B cell (primary cell): ENCODE measurements at regions of chr5 and their contacts with region 1.

Region 1: GRCh38 chr5:53095931-53096525 is 13.5 kb downstream of the MOCS2 start:
- DNase-seq: peak; percentile 67
- ATAC-seq: peak; percentile 80
- H3K4me3 ChIP-seq: no peak overlapping the region
- H3K4me3 Mint-ChIP-seq: no peak overlapping the region
- H3K27ac ChIP-seq: no peak overlapping the region
- H3K27ac Mint-ChIP-seq: no peak overlapping the region
- H3K4me1 ChIP-seq: no peaks in the 10 kb centered on the region
- H3K4me1 Mint-ChIP-seq: no peaks in the 10 kb centered on the region
- H3K27me3 ChIP-seq: no peaks in the 10 kb centered on the region
- H3K27me3 Mint-ChIP-seq: no peaks in the 10 kb centered on the region
- CTCF ChIP-seq: peak; percentile 96

Region 2: DNA sequence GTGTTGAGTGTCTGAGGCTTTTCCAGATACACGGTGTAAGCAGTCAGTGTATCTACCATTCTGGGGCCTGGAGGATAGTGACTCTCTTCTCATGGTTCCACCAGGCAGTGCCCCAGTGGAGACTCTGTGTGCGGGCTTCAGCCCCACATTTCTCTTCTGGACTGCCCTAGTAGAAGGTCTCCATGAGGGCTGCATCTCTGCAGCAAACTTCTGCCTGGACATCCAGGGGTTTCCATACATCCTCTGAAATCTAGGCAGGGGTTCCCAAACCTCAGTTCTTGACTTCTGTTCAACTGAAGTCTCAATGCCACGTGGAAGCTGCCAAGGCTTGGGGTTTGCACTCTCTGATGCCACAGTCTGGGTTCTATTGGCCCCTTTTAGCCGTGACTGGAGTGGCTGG is 564.9 kb before region 1 on chr5:
- CTCF ChIA-PET with region 1: no interaction called
- POLR2A ChIA-PET with region 1: no interaction called
- intact Hi-C with region 1: no loop called
- DNase-seq: peak; percentile 3
- ATAC-seq: no peak
- H3K4me3 ChIP-seq: no peak overlapping the region
- H3K4me3 Mint-ChIP-seq: no peak overlapping the region
- H3K27ac ChIP-seq: no peak overlapping the region
- H3K27ac Mint-ChIP-seq: no peak overlapping the region
- H3K4me1 ChIP-seq: no peaks in the 10 kb centered on the region
- H3K4me1 Mint-ChIP-seq: no peaks in the 10 kb centered on the region
- H3K27me3 ChIP-seq: no peaks in the 10 kb centered on the region
- H3K27me3 Mint-ChIP-seq: no peaks in the 10 kb centered on the region
- CTCF ChIP-seq: no peak

Region 3: DNA sequence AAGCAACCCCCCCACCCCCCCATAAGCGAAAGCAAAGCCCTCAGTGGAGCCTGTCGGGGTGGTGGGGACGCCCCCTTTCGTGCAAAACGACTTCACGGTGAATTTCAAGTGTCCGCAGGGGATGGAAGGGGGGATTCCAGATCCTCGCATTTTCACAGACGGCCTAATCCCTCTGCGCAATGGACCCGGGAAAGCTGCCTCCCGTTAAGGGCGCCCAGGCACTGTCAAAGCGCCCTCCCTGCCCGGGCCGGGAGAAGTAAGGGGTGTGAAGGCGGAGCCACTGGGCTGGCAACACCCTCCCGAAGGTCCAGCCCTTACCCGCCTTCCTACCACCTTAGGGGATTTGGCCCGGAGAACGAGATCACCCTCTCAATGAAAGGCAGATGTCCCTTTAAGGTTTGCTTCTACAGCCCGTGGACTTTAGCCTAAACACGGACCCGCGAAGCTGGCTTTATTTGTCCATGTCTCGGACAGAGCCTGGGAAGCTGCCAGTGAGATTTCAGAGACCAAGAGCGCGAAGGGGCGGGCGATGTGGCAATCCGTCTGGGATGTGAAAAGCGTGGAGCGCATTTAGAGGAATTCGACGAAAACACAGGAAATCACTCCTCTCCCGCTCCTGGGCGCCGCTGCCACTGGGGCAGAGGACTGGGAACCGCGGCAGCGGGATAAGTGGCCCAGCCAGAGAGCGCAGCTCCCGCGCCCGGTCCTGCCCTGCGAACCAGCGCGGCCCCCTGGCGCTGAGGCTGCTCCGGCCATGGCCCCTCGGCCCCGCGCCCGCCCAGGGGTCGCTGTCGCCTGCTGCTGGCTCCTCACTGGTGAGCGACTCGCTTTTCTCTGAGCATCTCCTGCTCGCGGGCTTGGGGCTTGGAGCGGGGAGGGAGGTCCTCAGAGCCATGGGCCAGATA is 308.2 kb before region 1 on chr5 and contains the starts of genes ITGA1 and PELO:
- CTCF ChIA-PET with region 1: interaction called, 3 read pairs
- POLR2A ChIA-PET with region 1: no interaction called
- intact Hi-C with region 1: loop called (anchors 1 kb)
- DNase-seq: peak; percentile 54
- ATAC-seq: peak; percentile 76
- H3K4me3 ChIP-seq: peak within 1 kb of the TSS; percentile 41 to 79 (median 64)
- H3K4me3 Mint-ChIP-seq: peak within 1 kb of the TSS; percentile 87
- H3K27ac ChIP-seq: no peak within 1 kb of the TSS
- H3K27ac Mint-ChIP-seq: no peak within 1 kb of the TSS
- H3K4me1 ChIP-seq: peaks cover 13 to 17% of the 10 kb centered on the region in 2 donors
- H3K4me1 Mint-ChIP-seq: peaks cover 19% of the 10 kb centered on the region
- H3K27me3 ChIP-seq: peaks cover 0 to 45% (median 32%) of the 10 kb centered on the region in 4 experiments
- H3K27me3 Mint-ChIP-seq: peaks cover 46% of the 10 kb centered on the region
- CTCF ChIP-seq: peak; percentile 7
- total RNA-seq, gene ITGA1: 0.05 and 0.74 TPM in 2 replicates
- total RNA-seq, gene PELO: 5.8 and 6.4 TPM in 2 replicates

Region 4: GRCh38 chr5:52948418-52949076 is 147.5 kb before region 1 on chr5:
- CTCF ChIA-PET with region 1: interaction called, 16 read pairs
- POLR2A ChIA-PET with region 1: no interaction called
- intact Hi-C with region 1: loop called (anchors 2 kb)
- DNase-seq: peak; percentile 53
- ATAC-seq: peak; percentile 78
- H3K4me3 ChIP-seq: no peak overlapping the region
- H3K4me3 Mint-ChIP-seq: no peak overlapping the region
- H3K27ac ChIP-seq: no peak overlapping the region
- H3K27ac Mint-ChIP-seq: no peak overlapping the region
- H3K4me1 ChIP-seq: no peaks in the 10 kb centered on the region
- H3K4me1 Mint-ChIP-seq: peaks cover 10% of the 10 kb centered on the region
- H3K27me3 ChIP-seq: no peaks in the 10 kb centered on the region
- H3K27me3 Mint-ChIP-seq: peaks cover 6% of the 10 kb centered on the region
- CTCF ChIP-seq: peak; percentile 62

Region 5: GRCh38 chr5:53109443-53110127 is 13.6 kb after region 1 on chr5 and contains the start of gene MOCS2:
- CTCF ChIA-PET with region 1: interaction called, 37 read pairs
- POLR2A ChIA-PET with region 1: no interaction called
- intact Hi-C with region 1: loop called (anchors 1 kb)
- DNase-seq: peak; percentile 93
- ATAC-seq: peak; percentile 96
- H3K4me3 ChIP-seq: peak within 1 kb of the TSS; percentile 65 to 84 (median 79)
- H3K4me3 Mint-ChIP-seq: peak within 1 kb of the TSS; percentile 98
- H3K27ac ChIP-seq: peak within 1 kb of the TSS; percentile 71 to 78
- H3K27ac Mint-ChIP-seq: peak within 1 kb of the TSS; percentile 92
- H3K4me1 ChIP-seq: peaks cover 9 to 11% of the 10 kb centered on the region in 2 donors
- H3K4me1 Mint-ChIP-seq: peaks cover 44% of the 10 kb centered on the region
- H3K27me3 ChIP-seq: no peaks in the 10 kb centered on the region
- H3K27me3 Mint-ChIP-seq: no peaks in the 10 kb centered on the region
- CTCF ChIP-seq: no peak
- total RNA-seq, gene MOCS2: 14.9 and 15.3 TPM in 2 replicates

Region 6: DNA sequence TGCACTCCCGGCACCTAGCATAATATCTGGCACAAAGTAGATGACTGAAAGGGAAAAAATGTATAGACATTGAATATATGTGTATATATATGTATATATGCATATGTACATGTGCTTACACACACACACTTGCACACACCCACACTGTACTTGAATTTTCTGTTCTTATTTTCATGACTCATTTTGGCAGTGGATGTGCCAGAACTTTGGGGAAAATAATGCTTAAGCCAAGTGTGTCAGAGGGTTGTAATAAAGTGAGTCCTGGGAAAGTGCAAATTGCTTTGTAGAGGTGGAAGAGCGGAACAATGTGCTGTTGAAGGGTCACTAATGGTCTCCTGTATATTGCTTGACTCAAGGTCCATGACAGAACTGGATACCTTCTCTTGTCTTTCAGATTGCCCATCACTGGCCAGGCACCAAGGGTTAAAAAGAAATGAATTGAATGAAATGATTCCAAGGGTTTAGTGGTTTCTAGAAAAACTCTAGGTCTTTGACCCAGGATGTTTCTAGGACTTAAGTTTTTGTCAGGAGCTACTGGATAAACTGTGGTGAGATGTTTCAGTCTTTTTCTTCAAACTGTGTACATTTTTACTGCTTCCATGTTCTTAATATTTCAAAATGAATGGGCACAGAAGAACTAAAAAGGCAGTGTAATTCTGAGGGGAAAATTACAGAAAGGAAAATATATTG is 143.4 kb after region 1 on chr5:
- CTCF ChIA-PET with region 1: no interaction called
- POLR2A ChIA-PET with region 1: no interaction called
- intact Hi-C with region 1: no loop called
- DNase-seq: no peak
- ATAC-seq: no peak
- H3K4me3 ChIP-seq: no peak overlapping the region
- H3K4me3 Mint-ChIP-seq: no peak overlapping the region
- H3K27ac ChIP-seq: no peak overlapping the region
- H3K27ac Mint-ChIP-seq: no peak overlapping the region
- H3K4me1 ChIP-seq: no peaks in the 10 kb centered on the region
- H3K4me1 Mint-ChIP-seq: no peaks in the 10 kb centered on the region
- H3K27me3 ChIP-seq: no peaks in the 10 kb centered on the region
- H3K27me3 Mint-ChIP-seq: peaks cover 8% of the 10 kb centered on the region
- CTCF ChIP-seq: no peak

Region 7: GRCh38 chr5:54217826-54218503 is 1121.9 kb after region 1 on chr5:
- CTCF ChIA-PET with region 1: no interaction called
- POLR2A ChIA-PET with region 1: no interaction called
- intact Hi-C with region 1: loop called (anchors 1 kb)
- DNase-seq: peak; percentile 58
- ATAC-seq: no peak
- H3K4me3 ChIP-seq: no peak overlapping the region
- H3K4me3 Mint-ChIP-seq: no peak overlapping the region
- H3K27ac ChIP-seq: no peak overlapping the region
- H3K27ac Mint-ChIP-seq: no peak overlapping the region
- H3K4me1 ChIP-seq: no peaks in the 10 kb centered on the region
- H3K4me1 Mint-ChIP-seq: no peaks in the 10 kb centered on the region
- H3K27me3 ChIP-seq: no peaks in the 10 kb centered on the region
- H3K27me3 Mint-ChIP-seq: no peaks in the 10 kb centered on the region
- CTCF ChIP-seq: peak; percentile 74